ENCODE measurements at regions of chr2 and their contacts with region 1.

Region 1: GRCh38 chr2:168346725-168347477 is 99.5 kb upstream of the STK39 start:
- DNase-seq: peak in 2 of 3 donors; percentile 60 to 86
- ATAC-seq: peak; percentile 77
- H3K4me3 ChIP-seq: no peak overlapping the region
- H3K4me1 ChIP-seq: no peaks in the 10 kb centered on the region
- CTCF ChIP-seq: peak; percentile 69

Region 2: DNA sequence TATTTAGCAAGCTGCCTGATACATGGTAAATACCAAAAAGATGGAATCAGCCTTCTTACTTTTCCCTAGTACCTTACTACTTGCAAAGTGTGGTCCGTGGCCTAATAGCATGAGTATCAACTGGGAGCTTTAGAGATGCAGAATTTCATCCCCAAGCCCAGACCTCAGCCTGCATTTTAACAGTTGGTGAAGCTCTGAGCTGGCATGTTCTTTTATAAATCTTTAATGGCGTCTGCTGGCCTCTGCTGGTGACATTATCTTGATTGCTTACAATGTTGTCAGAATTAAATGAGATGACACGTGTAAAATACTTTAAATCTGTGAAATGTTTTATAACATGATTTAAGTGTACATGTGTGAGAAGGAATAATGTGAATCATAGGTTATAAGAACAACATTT is 340.4 kb after region 1 on chr2:
- intact Hi-C with region 1: loop called in 1 of 2 experiments (anchors 5 kb)
- DNase-seq: peak in 1 of 3 donors; percentile 65
- ATAC-seq: peak; percentile 45
- H3K4me3 ChIP-seq: no peak overlapping the region
- H3K4me1 ChIP-seq: no peaks in the 10 kb centered on the region
- CTCF ChIP-seq: no peak

Region 3: GRCh38 chr2:168758970-168759820 is 412.3 kb after region 1 on chr2:
- intact Hi-C with region 1: loop called (anchors 5 kb)
- DNase-seq: peak in 1 of 3 donors; percentile 39
- ATAC-seq: peak; percentile 84
- H3K4me3 ChIP-seq: no peak overlapping the region
- H3K4me1 ChIP-seq: peaks cover 12% of the 10 kb centered on the region
- CTCF ChIP-seq: no peak

Region 4: GRCh38 chr2:168912901-168913369 is 566.0 kb after region 1 on chr2:
- intact Hi-C with region 1: loop called in 1 of 2 experiments (anchors 10 kb)
- DNase-seq: peak in 1 of 3 donors; percentile 34
- ATAC-seq: peak; percentile 67
- H3K4me3 ChIP-seq: no peak overlapping the region
- H3K4me1 ChIP-seq: no peaks in the 10 kb centered on the region
- CTCF ChIP-seq: no peak

Measured in mucosa of descending colon (tissue), 3 donors.